Activated CD4-positive, alpha-beta T cell treated with anti-CD3 and anti-CD28 coated beads for 36 hours (primary cell): ENCODE measurements at regions of chr19 and their contacts with region 1.

Region 1: GRCh38 chr19:14432791-14433553 is at the start of gene PKN1:
- DNase-seq: peak; percentile 75
- ATAC-seq: peak; percentile 11
- H3K4me3 Mint-ChIP-seq: peak within 1 kb of the TSS; percentile 73
- H3K27ac Mint-ChIP-seq: peak within 1 kb of the TSS; percentile 71
- H3K4me1 Mint-ChIP-seq: peaks cover 30% of the 10 kb centered on the region
- H3K27me3 Mint-ChIP-seq: no peaks in the 10 kb centered on the region
- total RNA-seq, gene PKN1: 173 to 176 TPM

Region 2: GRCh38 chr19:14147797-14148605 is 285.0 kb before region 1 on chr19:
- CTCF ChIA-PET with region 1: no interaction called
- POLR2A ChIA-PET with region 1: no interaction called
- intact Hi-C with region 1: no loop called
- DNase-seq: peak; percentile 74
- ATAC-seq: peak; percentile 62
- H3K4me3 Mint-ChIP-seq: peak overlapping the region; percentile 4
- H3K27ac Mint-ChIP-seq: peak overlapping the region; percentile 92
- H3K4me1 Mint-ChIP-seq: peaks cover 56% of the 10 kb centered on the region
- H3K27me3 Mint-ChIP-seq: no peaks in the 10 kb centered on the region

Region 3: DNA sequence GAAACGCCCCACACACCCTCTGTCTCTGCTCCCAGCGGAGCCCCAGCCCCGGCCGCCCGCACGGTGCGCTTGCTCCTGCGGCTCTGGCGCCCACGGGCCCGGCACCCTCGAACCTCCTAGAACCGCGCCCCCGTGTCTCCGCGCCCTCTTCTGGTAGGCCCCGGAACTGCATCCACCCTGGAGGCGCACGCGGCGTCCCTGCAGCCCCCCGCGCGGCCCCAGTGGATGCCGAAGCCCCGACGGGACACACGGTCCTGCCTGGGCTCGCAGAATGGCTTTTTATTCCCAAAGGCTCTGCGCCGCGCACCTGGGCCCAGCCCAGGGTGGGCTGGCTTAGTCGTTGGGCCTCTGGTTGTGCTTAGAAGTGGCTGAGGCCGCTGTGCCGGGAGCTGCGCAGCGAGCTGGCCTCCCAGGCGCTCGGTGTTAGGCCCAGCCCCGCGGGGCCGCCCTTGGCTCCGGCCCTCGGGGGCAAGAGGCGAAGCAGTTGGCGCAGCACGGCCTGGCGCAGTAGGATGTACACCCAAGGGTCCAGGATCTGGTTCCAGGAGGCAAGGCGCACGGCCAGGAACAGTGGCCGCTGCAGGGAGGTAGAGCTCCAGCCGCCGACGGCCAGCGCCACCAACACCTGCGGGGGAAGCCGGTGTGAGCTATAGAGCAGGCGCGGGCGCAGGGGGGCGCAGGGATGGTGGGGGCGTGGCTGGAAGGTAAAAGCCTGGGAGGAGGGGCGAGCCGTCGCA is 39.4 kb after region 1 on chr19:
- CTCF ChIA-PET with region 1: interaction called, 13 read pairs
- POLR2A ChIA-PET with region 1: no interaction called
- intact Hi-C with region 1: loop called (anchors 1 kb)
- DNase-seq: peak; percentile 93
- ATAC-seq: peak; percentile 56
- H3K4me3 Mint-ChIP-seq: no peak overlapping the region
- H3K27ac Mint-ChIP-seq: no peak overlapping the region
- H3K4me1 Mint-ChIP-seq: peaks cover 32% of the 10 kb centered on the region
- H3K27me3 Mint-ChIP-seq: peaks cover 16% of the 10 kb centered on the region

Region 4: GRCh38 chr19:14479975-14480699 is 47.2 kb after region 1 on chr19:
- CTCF ChIA-PET with region 1: interaction called, 17 read pairs
- POLR2A ChIA-PET with region 1: no interaction called
- intact Hi-C with region 1: loop called in 1 of 2 experiments (anchors 1 kb)
- DNase-seq: peak; percentile 84
- ATAC-seq: peak; percentile 60
- H3K4me3 Mint-ChIP-seq: no peak overlapping the region
- H3K27ac Mint-ChIP-seq: no peak overlapping the region
- H3K4me1 Mint-ChIP-seq: peaks cover 14% of the 10 kb centered on the region
- H3K27me3 Mint-ChIP-seq: no peaks in the 10 kb centered on the region

Region 5: GRCh38 chr19:16001481-16002312 is 1568.7 kb after region 1 on chr19:
- CTCF ChIA-PET with region 1: no interaction called
- POLR2A ChIA-PET with region 1: no interaction called
- intact Hi-C with region 1: loop called in 1 of 2 experiments (anchors 10 kb)
- DNase-seq: peak; percentile 69
- ATAC-seq: peak; percentile 98
- H3K4me3 Mint-ChIP-seq: peak overlapping the region; percentile 61
- H3K27ac Mint-ChIP-seq: peak overlapping the region; percentile 86
- H3K4me1 Mint-ChIP-seq: peaks cover 28% of the 10 kb centered on the region
- H3K27me3 Mint-ChIP-seq: no peaks in the 10 kb centered on the region